ENCODE measurements at regions of chr5 and their contacts with region 1.

Region 1: GRCh38 chr5:177311723-177312648 is at the start of gene MXD3:
- DNase-seq: peak; percentile 96 to 99 (median 97)
- ATAC-seq: peak; percentile 81 to 92 (median 90)
- H3K4me3 ChIP-seq: peak within 1 kb of the TSS; percentile 6 to 65 (median 58)
- H3K27ac ChIP-seq: peak within 1 kb of the TSS in 1 of 12 donors; percentile 10
- H3K4me1 ChIP-seq: peaks cover 0 to 65% (median 25%) of the 10 kb centered on the region in 12 donors
- H3K27me3 ChIP-seq: no peaks in the 10 kb centered on the region
- CTCF ChIP-seq: no peak
- POLR2A ChIP-seq: no peak
- total RNA-seq, gene MXD3: 0.52 to 9.1 (median 3.1) TPM

Region 2: DNA sequence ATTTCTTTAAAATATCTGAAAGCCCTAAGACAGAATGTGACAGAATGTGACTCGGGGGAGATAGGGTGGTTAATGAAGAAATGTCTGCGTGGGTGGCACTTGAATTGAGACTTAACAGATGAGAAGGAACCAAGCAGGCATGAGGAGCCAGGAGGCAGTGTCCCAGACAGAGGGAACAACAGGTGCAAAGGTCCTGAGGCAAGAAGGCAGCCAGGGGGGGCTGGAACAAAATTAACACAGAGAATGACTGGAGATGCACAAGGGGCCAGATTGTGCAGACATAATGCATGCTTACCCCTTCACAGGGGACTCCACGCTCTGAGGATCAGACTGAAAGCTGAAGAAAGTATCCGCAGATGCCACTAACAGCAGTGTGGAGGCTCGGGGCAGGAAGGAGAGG is 37.8 kb after region 1 on chr5:
- intact Hi-C with region 1: loop called in 1 of 10 experiments (anchors 2 kb)
- DNase-seq: no peak
- ATAC-seq: no peak
- H3K4me3 ChIP-seq: peak overlapping the region in 5 of 12 donors; percentile 78 to 100 (median 92)
- H3K27ac ChIP-seq: no peak overlapping the region
- H3K4me1 ChIP-seq: peaks cover 9 to 57% (median 26%) of the 10 kb centered on the region in 12 donors
- H3K27me3 ChIP-seq: no peaks in the 10 kb centered on the region
- CTCF ChIP-seq: no peak
- POLR2A ChIP-seq: no peak

Region 3: DNA sequence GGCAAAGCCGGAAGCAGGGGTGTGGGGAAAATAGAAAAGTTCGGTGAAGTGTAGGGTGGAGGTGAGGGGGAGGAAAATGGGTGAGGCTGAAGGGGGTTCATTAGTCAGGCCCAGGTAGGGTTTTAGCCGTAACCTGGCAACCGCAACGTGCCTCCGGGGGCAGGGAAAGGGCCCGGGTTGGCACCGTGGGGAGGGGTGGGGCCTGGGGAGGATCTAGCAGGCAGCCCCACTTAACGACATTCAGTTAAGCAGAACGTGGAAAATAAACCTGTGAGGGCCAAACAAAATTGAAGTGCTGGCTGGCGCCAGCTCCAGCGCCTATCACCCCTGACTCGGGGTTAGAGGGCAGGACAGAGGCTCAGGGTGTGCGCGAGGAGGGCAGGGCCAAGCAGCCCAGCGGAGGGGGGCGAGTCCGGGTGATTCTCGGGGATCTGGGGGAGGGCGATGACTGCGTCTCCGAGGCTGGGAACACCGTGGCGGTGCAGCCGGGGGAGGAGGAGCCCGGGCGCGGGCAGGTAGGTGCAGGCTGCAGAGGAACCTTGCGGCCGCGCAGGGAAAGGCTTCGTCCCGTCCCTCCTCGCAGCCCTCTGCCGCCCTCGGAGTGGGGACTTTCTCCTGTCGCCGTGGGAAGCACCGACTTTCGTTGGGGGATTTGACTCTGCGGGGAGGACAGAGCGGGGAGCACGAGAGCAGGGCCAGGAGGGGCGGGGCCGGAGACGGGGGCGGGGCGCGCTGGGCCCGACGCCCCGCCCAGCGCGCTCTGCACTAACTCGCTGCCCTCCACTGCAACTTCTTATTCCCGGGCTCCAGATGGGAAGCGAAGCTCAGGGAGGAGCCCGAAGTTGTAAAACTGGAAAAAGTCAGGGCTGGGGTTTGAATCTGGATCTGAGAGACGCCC is 50.9 kb after region 1 on chr5:
- intact Hi-C with region 1: loop called in 2 of 10 experiments (anchors 5 to 10 kb)
- DNase-seq: peak; percentile 54 to 71 (median 63)
- ATAC-seq: peak in 3 of 4 donors; percentile 42 to 54 (median 53)
- H3K4me3 ChIP-seq: peak overlapping the region in 11 of 12 donors; percentile 5 to 59 (median 49)
- H3K27ac ChIP-seq: peak overlapping the region in 2 of 12 donors; percentile 29 to 35
- H3K4me1 ChIP-seq: peaks cover 0 to 86% (median 41%) of the 10 kb centered on the region in 12 donors
- H3K27me3 ChIP-seq: no peaks in the 10 kb centered on the region
- CTCF ChIP-seq: no peak
- POLR2A ChIP-seq: no peak

Region 4: GRCh38 chr5:177390363-177391300 is 78.6 kb after region 1 on chr5:
- intact Hi-C with region 1: loop called in 2 of 10 experiments (anchors 5 to 10 kb)
- DNase-seq: peak; percentile 69 to 83 (median 79)
- ATAC-seq: peak; percentile 77 to 89 (median 82)
- H3K4me3 ChIP-seq: no peak overlapping the region
- H3K27ac ChIP-seq: peak overlapping the region in 1 of 12 donors; percentile 68
- H3K4me1 ChIP-seq: peaks cover 0 to 25% (median 0%) of the 10 kb centered on the region in 12 donors
- H3K27me3 ChIP-seq: peaks cover 0 to 25% (median 0%) of the 10 kb centered on the region in 9 donors
- CTCF ChIP-seq: peak; percentile 4 to 99 (median 98)
- POLR2A ChIP-seq: no peak

Measured in heart left ventricle (tissue), 16 donors.